ENCODE measurements at regions of chr18 and their contacts with region 1.

Region 1: DNA sequence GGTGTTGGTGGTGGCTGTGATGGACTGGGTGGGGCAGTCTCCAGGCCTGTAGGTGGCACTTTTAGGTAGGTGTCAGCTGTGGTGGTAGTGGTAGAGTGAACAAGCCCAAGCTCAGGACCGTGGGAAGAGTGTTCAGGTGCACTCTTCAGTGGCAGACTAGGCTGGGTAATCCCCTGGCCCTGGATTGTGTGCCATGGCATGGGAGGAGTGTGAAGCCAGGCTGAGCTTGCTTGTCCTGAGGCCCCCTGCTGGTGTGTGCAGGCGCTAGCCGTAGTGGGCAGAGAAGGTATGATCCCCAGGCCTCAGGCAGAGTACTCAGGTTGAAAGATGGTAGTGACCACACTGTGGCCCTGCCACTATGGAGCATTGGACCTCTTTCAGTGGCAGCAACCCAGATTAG is 850.3 kb downstream of the DSC3 start:
- DNase-seq: no peak
- H3K4me3 ChIP-seq: no peak overlapping the region
- H3K27ac ChIP-seq: no peak overlapping the region
- H3K4me1 ChIP-seq: no peaks in the 10 kb centered on the region
- H3K27me3 ChIP-seq: no peaks in the 10 kb centered on the region
- CTCF ChIP-seq: peak in 1 of 2 donors; percentile 6

Region 2: GRCh38 chr18:30088238-30089015 is 103.8 kb before region 1 on chr18:
- CTCF ChIA-PET with region 1: no interaction called
- dilution Hi-C with region 1: no loop called
- in situ Hi-C with region 1: no loop called
- intact Hi-C with region 1: loop called (anchors 10 kb)
- DNase-seq: no peak
- H3K4me3 ChIP-seq: no peak overlapping the region
- H3K27ac ChIP-seq: no peak overlapping the region
- H3K4me1 ChIP-seq: no peaks in the 10 kb centered on the region
- H3K27me3 ChIP-seq: no peaks in the 10 kb centered on the region
- CTCF ChIP-seq: no peak

Measured in mammary epithelial cell (primary cell).